K562 (cell line): ENCODE measurements at regions of chr11 and their contacts with region 1.

Region 1: DNA sequence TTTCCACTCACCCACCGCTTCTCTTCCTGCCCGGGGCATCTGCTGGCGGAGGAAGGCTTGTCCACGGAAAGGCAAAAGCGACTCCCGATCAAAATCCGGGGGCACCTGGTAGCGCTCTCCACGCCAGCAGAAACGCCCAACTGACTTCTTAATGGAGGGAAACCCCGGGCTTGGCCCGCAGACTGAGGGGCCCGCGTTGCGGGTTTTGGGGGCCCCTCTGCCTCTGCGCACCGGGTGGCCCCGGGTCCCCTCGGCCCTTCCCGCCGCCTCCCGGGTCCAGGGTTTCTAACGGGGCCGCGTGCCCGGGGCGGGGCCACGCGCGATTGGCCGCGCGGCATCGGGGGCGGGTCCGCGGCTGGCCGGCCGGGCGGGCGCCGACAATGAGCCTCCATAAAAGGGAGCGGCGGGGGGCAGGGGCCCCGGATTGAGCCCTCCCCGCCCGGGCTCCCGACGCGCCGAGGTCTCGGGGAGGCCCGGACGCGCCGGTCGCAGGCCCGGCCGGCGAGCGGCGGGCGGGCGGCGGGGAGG is at the start of gene SPINDOC:
- DNase-seq: peak; percentile 87 to 97 (median 96)
- ATAC-seq: peak; percentile 92
- H3K4me3 ChIP-seq: peak within 1 kb of the TSS; percentile 82
- H3K27ac ChIP-seq: peak within 1 kb of the TSS; percentile 84
- H3K4me1 ChIP-seq: peaks cover 22 to 24% of the 10 kb centered on the region in 2 experiments
- H3K27me3 ChIP-seq: no peaks in the 10 kb centered on the region
- CTCF ChIP-seq: no peak
- EP300 ChIP-seq: no peak
- POLR2A ChIP-seq: peak; percentile 59; the same call in 1 of the 2 replicates
- RAD21 ChIP-seq: no peak
- polyA plus RNA-seq, gene SPINDOC: 0.70 to 0.95 TPM

Region 2: GRCh38 chr11:63745304-63746170 is 67.6 kb before region 1 on chr11:
- CTCF ChIA-PET with region 1: no interaction called
- POLR2A ChIA-PET with region 1: no interaction called
- in situ Hi-C with region 1: no loop called
- intact Hi-C with region 1: no loop called
- DNase-seq: peak in 1 of 4 experiments; percentile 50
- ATAC-seq: peak; percentile 80
- H3K4me3 ChIP-seq: no peak overlapping the region; the same call in 1 of the 2 replicates
- H3K27ac ChIP-seq: peak overlapping the region; percentile 57
- H3K4me1 ChIP-seq: peaks cover 11 to 25% of the 10 kb centered on the region in 2 experiments; a peak in 4 of 5 replicates
- H3K27me3 ChIP-seq: no peaks in the 10 kb centered on the region
- CTCF ChIP-seq: peak; percentile 40 to 57 (median 50); a peak in 5 of 6 replicates
- EP300 ChIP-seq: no peak
- POLR2A ChIP-seq: no peak
- RAD21 ChIP-seq: peak in 1 of 2 experiments; percentile 19; a peak in 1 of 4 replicates

Region 3: GRCh38 chr11:63768237-63769043 is 44.7 kb before region 1 on chr11 and contains the start of gene ZFTA:
- CTCF ChIA-PET with region 1: no interaction called
- POLR2A ChIA-PET with region 1: interaction called, 3 read pairs
- in situ Hi-C with region 1: no loop called
- intact Hi-C with region 1: loop called (anchors 5 kb)
- DNase-seq: peak; percentile 72 to 91 (median 84)
- ATAC-seq: peak; percentile 70
- H3K4me3 ChIP-seq: peak within 1 kb of the TSS; percentile 60
- H3K27ac ChIP-seq: peak within 1 kb of the TSS; percentile 65
- H3K4me1 ChIP-seq: peaks cover 8 to 48% of the 10 kb centered on the region in 2 experiments
- H3K27me3 ChIP-seq: no peaks in the 10 kb centered on the region
- CTCF ChIP-seq: peak in 2 of 3 experiments; percentile 64 to 79; a peak in 5 of 6 replicates
- EP300 ChIP-seq: no peak
- POLR2A ChIP-seq: no peak
- RAD21 ChIP-seq: peak in 1 of 2 experiments; percentile 76; a peak in 3 of 4 replicates
- polyA plus RNA-seq, gene ZFTA: 0.45 TPM

Region 4: DNA sequence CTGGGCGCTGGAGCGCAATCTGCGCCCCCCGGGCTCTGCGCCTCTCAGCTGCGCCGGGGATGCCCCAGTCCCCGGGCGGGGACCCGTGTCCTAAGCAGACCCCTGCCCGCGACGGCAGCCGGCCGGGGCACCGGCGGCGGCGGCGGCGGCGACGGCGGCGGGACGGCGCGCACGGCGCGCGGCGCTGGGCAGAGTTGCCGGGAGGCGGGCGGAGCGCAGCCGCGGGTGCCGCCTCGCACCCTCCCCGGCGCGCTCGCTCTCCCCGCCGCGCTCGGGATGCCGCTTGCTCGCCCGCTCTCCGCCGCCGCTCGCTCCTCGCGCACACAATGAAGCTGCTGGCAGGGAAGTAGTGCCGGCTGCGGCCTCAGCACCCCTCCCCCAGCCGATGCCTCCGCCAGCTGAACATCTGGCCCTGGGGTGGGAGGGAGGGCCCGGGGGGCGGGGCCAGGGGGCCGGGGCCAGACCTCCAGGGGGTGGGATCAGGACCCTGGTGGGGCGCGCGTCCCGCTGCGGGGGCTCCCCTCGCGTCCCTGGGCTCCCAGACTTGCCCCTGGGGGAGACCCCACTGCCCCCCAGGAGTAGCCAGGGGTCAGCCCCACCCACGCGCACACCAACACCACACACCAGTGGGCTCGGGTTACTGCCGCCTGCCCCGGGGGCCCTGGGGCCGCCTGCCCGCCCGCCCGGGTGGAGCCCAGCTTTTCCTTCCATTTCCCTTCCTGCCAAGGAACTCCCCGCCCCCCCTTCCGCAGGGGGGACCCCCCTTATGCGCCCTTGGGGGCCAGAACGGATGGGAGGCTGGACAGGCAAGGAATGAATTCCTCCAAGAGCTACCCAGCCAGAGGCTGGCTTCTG is 104.0 kb after region 1 on chr11 and contains the start of gene RCOR2:
- CTCF ChIA-PET with region 1: no interaction called
- POLR2A ChIA-PET with region 1: no interaction called
- in situ Hi-C with region 1: no loop called
- intact Hi-C with region 1: no loop called
- DNase-seq: peak; percentile 86 to 92 (median 92)
- ATAC-seq: peak; percentile 42
- H3K4me3 ChIP-seq: peak within 1 kb of the TSS; percentile 48
- H3K27ac ChIP-seq: peak within 1 kb of the TSS; percentile 76
- H3K4me1 ChIP-seq: peaks cover 36 to 68% of the 10 kb centered on the region in 2 experiments
- H3K27me3 ChIP-seq: no peaks in the 10 kb centered on the region
- CTCF ChIP-seq: no peak
- EP300 ChIP-seq: no peak
- POLR2A ChIP-seq: no peak
- RAD21 ChIP-seq: no peak
- polyA plus RNA-seq, gene RCOR2: 0.04 TPM in 1 of 2 experiments, not detected in the other

Region 5: GRCh38 chr11:63937713-63938478 is 124.8 kb after region 1 on chr11:
- CTCF ChIA-PET with region 1: no interaction called
- POLR2A ChIA-PET with region 1: no interaction called
- in situ Hi-C with region 1: no loop called
- intact Hi-C with region 1: no loop called
- DNase-seq: peak; percentile 59 to 73 (median 66)
- ATAC-seq: peak; percentile 42
- H3K4me3 ChIP-seq: peak overlapping the region; percentile 72
- H3K27ac ChIP-seq: peak overlapping the region; percentile 72
- H3K4me1 ChIP-seq: peaks cover 34% of the 10 kb centered on the region in 2 experiments
- H3K27me3 ChIP-seq: no peaks in the 10 kb centered on the region
- CTCF ChIP-seq: no peak
- EP300 ChIP-seq: no peak
- POLR2A ChIP-seq: no peak
- RAD21 ChIP-seq: no peak

Region 6: DNA sequence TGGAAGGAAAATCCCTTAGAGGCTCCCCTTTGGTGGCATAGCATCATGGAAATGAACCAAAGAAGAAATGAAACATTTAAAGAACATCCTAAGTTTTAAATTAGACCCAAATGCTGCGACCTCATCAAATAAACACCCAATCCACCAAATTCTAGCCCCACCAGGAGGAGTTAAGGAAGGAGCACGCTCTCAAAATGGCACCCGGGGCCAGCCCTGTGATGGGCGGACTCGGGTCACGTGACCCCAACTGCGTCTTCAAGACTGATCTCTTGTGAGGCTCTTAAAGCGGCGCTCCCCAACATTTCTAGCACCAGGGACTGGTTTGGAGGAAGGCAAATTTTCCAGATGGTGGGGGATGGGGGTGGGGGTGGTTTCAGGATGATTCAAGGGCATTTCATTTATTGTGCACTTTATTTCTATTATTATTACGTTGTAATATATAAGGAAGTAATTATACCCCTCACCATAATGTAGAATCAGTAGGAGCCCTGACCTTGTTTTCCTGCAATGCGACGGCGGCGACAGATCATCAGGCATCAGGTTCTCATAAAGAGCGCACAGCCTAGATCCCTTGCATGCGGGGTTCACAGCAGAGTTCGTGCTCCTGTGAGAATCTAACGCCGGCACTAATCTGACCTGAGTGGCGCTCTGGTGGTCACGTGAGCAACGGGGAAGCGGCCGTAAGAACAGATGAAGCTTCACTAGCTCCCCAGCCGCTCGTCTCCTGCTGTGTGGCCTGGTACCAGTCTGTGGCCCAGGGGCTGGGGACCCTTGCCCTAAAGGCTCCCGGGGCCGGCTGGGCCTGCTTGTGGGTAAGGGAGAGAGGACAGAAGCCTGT is 687.3 kb after region 1 on chr11:
- CTCF ChIA-PET with region 1: no interaction called
- POLR2A ChIA-PET with region 1: no interaction called
- in situ Hi-C with region 1: no loop called
- intact Hi-C with region 1: no loop called
- DNase-seq: peak; percentile 77 to 86 (median 80)
- ATAC-seq: peak; percentile 93
- H3K4me3 ChIP-seq: 0 out of 2 replicates have a peak overlapping the region, but pooled peaks have one; percentile 5
- H3K27ac ChIP-seq: peak overlapping the region; percentile 68
- H3K4me1 ChIP-seq: peaks cover 12 to 23% of the 10 kb centered on the region in 2 experiments
- H3K27me3 ChIP-seq: peaks cover 0 to 9% of the 10 kb centered on the region in 2 experiments; a peak in 3 of 5 replicates
- CTCF ChIP-seq: no peak
- EP300 ChIP-seq: peak; percentile 6; the same call in 1 of the 2 replicates
- POLR2A ChIP-seq: no peak
- RAD21 ChIP-seq: no peak